Motor neuron (in vitro differentiated cells): ENCODE measurements at regions of chr5 and their contacts with region 1.

Region 1: DNA sequence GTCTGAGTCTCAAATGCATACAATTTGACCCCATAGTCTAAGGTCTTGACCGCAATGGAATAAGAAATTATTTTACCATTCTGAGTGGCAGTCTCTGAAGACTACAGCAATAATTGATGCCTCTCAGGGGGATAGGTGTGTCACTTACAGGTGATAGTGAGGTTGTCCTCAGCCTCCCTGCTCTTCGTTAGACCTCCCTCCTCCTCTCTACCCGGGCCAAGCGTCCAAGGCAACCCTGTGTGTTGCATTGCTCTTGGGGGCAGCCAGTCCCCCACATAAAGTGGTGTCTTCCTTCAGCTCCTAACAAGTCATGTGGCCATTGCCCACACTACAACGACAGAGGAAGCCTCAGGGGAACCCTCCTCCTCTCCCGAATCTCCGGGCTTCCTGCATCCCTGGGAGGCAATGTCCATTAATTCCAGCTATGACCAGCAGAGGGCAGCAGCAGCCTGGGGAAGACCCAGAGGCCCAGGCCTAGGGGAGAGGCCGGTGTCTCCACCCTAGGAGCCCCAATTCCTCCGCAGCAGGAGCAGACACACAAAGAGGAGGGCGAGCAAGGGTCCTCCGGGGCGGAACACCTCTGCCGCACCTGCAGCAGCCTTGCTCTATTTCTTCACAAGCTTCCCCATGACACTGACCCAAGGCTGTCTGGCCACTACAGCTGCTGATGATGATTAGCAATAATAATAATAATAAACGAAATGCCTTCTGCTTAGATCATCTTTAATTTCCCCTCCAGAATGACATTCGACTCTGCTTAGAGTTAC is 134.8 kb downstream of the KCNIP1 start:
- ATAC-seq: peak; percentile 85 to 96 (median 87)
- H3K4me3 ChIP-seq: no peak overlapping the region
- H3K27ac ChIP-seq: no peak overlapping the region
- H3K4me1 ChIP-seq: peaks cover 11 to 12% of the 10 kb centered on the region in 2 donors

Region 2: DNA sequence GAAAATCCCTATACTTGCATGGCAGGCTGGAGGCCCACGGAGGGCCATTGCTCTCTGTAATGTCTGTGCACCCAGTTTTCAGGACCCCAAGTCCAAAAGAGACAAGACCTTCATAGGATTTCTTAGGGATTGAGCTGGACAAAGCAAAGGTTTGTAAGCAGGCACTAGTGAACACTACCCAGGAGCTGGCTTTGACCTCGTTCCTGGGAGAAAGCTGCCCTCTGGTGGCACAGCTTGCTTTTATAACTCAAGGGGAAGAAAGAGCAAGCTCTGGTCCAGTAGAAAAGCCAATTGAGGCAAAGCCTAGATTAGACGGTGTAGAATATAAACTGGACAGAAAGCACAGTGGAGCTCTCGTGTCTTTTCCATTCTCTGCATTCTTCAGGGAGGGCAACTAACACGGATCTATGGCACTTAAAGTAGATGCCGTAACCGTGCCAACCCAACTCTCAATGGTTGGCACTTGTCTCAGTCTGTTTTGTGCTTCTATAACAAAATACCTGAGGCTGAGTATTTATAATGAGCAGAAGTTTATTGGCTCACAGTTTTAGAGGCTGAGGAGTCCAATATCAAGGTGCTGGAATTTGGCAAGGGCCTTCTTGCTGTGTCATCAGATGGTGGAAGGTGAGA is 152.8 kb after region 1 on chr5:
- in situ Hi-C with region 1: loop called in 1 of 9 experiments (anchors 25 kb)
- ATAC-seq: peak; percentile 66 to 95 (median 86)
- H3K4me3 ChIP-seq: no peak overlapping the region
- H3K27ac ChIP-seq: no peak overlapping the region
- H3K4me1 ChIP-seq: peaks cover 0 to 2% of the 10 kb centered on the region in 2 donors